ENCODE measurements at regions of chr2 and their contacts with region 1.

Region 1: GRCh38 chr2:12005886-12006681 is 259.7 kb downstream of the LPIN1 start:
- DNase-seq: peak; percentile 83
- H3K4me3 Mint-ChIP-seq: no peak overlapping the region
- H3K27ac Mint-ChIP-seq: no peak overlapping the region
- H3K4me1 Mint-ChIP-seq: no peaks in the 10 kb centered on the region
- H3K27me3 Mint-ChIP-seq: no peaks in the 10 kb centered on the region
- CTCF ChIP-seq: no peak

Region 2: DNA sequence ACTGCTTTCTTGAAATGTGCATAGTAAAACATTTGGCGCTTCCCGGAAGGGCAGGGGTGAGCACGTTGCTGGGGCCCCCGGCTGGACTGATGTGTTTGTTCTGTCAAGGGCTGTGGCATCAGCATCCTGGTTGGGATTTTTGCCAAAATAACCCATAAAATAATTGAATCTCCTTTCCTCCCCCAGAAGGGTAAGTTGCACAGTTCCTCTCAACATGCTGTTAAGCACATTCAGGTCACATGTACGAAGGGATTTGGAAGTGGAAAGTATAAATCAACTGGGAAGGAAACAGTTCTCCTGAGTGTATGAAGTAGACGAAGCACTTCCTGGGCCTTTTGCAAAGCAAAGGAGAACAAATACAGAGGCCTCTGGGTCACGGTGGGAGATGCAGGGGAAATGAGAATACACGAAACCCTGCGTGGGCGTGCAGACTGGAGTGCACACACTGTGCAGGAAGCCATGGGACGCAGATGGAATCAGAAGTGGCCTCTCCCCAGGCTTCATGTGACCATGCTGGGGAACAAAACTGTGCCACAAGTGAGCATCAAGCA is 75.8 kb before region 1 on chr2:
- CTCF ChIA-PET with region 1: no interaction called
- POLR2A ChIA-PET with region 1: no interaction called
- intact Hi-C with region 1: no loop called
- DNase-seq: no peak
- H3K4me3 Mint-ChIP-seq: no peak overlapping the region
- H3K27ac Mint-ChIP-seq: no peak overlapping the region
- H3K4me1 Mint-ChIP-seq: peaks cover 6% of the 10 kb centered on the region
- H3K27me3 Mint-ChIP-seq: no peaks in the 10 kb centered on the region
- CTCF ChIP-seq: no peak

Region 3: DNA sequence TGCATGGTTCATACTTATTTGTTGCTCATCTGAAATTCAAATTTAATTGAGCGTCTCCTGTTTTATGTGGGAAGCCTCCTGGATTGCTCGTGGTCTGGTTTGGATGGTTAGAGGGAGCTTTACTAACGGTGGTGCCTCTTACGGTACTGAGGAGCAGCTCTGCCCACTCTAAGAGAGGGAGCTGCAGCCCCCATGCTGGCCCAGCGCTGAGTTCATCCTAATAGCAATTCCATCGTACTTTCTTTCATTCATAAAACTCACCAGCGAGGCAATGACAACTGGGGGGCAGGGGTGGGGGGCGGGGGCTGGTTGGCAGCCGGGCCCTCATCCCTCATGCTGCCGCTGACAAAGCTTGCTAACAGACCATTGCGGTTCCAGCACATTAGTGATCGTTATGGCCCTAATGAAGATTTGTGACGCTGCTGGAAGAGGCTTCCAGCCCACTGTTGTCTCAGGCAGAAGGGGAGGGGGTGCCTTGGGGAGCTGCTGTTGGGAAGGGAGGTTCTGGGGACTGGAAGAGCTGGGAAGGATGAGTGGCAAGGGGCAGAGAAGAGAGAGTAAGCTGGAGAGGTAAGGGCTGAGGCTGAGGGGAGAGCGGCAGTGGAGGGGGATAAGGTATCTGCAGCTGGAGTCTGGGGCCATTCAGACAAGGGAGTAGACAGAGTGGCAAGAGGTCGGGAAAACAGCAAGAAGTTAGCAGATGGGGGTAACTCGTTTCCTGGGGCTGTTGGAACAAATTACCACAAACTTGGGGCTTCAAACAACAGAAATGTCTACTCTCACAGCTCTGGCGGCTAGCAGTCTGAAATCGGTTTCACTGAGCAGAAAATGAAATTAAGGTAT is 21.5 kb before region 1 on chr2:
- CTCF ChIA-PET with region 1: interaction called, 3 read pairs
- POLR2A ChIA-PET with region 1: interaction called, 11 read pairs
- intact Hi-C with region 1: no loop called
- DNase-seq: no peak
- H3K4me3 Mint-ChIP-seq: no peak overlapping the region
- H3K27ac Mint-ChIP-seq: peak overlapping the region; percentile 7
- H3K4me1 Mint-ChIP-seq: peaks cover 12% of the 10 kb centered on the region
- H3K27me3 Mint-ChIP-seq: no peaks in the 10 kb centered on the region
- CTCF ChIP-seq: no peak

Region 4: GRCh38 chr2:11995456-11995855 is 10.6 kb before region 1 on chr2:
- CTCF ChIA-PET with region 1: no interaction called
- POLR2A ChIA-PET with region 1: no interaction called
- intact Hi-C with region 1: no loop called
- DNase-seq: no peak
- H3K4me3 Mint-ChIP-seq: no peak overlapping the region
- H3K27ac Mint-ChIP-seq: no peak overlapping the region
- H3K4me1 Mint-ChIP-seq: peaks cover 14% of the 10 kb centered on the region
- H3K27me3 Mint-ChIP-seq: no peaks in the 10 kb centered on the region
- CTCF ChIP-seq: no peak

Region 5: DNA sequence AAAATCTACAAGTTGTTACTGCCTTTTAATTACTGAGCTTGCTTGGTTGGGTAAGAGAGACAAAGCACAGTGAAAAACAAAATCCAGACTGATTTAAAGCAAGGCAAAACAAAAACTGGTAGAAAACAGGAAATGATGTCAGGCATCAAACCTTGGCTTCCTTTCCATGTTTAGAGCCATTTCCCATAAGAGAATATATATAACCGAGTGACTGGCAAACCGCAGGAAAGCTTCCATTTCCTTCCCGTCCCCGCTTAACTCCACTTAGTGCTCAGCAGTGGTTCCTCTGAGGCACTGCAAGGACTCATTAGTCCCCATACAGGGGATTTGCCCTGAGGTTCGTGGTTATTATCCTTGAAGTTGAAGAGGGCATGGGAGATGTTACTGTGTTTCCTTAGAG is 186.7 kb after region 1 on chr2:
- CTCF ChIA-PET with region 1: no interaction called
- POLR2A ChIA-PET with region 1: no interaction called
- intact Hi-C with region 1: no loop called
- DNase-seq: no peak
- H3K4me3 Mint-ChIP-seq: no peak overlapping the region
- H3K27ac Mint-ChIP-seq: no peak overlapping the region
- H3K4me1 Mint-ChIP-seq: no peaks in the 10 kb centered on the region
- H3K27me3 Mint-ChIP-seq: no peaks in the 10 kb centered on the region
- CTCF ChIP-seq: no peak

Region 6: GRCh38 chr2:12469141-12469561 is 463.1 kb after region 1 on chr2:
- CTCF ChIA-PET with region 1: no interaction called
- POLR2A ChIA-PET with region 1: no interaction called
- intact Hi-C with region 1: no loop called
- DNase-seq: no peak
- H3K4me3 Mint-ChIP-seq: no peak overlapping the region
- H3K27ac Mint-ChIP-seq: no peak overlapping the region
- H3K4me1 Mint-ChIP-seq: no peaks in the 10 kb centered on the region
- H3K27me3 Mint-ChIP-seq: no peaks in the 10 kb centered on the region
- CTCF ChIP-seq: no peak